K562 (cell line): ENCODE measurements at regions of chr2 and their contacts with region 1.

Region 1: GRCh38 chr2:86105252-86105968 is at the start of gene POLR1A:
- DNase-seq: peak; percentile 65 to 92 (median 73)
- ATAC-seq: peak; percentile 95
- H3K4me3 ChIP-seq: peak within 1 kb of the TSS; percentile 72
- H3K27ac ChIP-seq: peak within 1 kb of the TSS; percentile 82
- H3K4me1 ChIP-seq: peaks cover 0 to 17% of the 10 kb centered on the region in 2 experiments; a peak in 2 of 5 replicates
- H3K27me3 ChIP-seq: no peaks in the 10 kb centered on the region
- CTCF ChIP-seq: no peak
- EP300 ChIP-seq: 0 out of 2 replicates have a peak, but pooled peaks have one; percentile 1
- POLR2A ChIP-seq: 0 out of 2 replicates have a peak, but pooled peaks have one; percentile 66
- RAD21 ChIP-seq: no peak
- polyA plus RNA-seq, gene POLR1A: 3.0 to 8.2 TPM

Region 2: DNA sequence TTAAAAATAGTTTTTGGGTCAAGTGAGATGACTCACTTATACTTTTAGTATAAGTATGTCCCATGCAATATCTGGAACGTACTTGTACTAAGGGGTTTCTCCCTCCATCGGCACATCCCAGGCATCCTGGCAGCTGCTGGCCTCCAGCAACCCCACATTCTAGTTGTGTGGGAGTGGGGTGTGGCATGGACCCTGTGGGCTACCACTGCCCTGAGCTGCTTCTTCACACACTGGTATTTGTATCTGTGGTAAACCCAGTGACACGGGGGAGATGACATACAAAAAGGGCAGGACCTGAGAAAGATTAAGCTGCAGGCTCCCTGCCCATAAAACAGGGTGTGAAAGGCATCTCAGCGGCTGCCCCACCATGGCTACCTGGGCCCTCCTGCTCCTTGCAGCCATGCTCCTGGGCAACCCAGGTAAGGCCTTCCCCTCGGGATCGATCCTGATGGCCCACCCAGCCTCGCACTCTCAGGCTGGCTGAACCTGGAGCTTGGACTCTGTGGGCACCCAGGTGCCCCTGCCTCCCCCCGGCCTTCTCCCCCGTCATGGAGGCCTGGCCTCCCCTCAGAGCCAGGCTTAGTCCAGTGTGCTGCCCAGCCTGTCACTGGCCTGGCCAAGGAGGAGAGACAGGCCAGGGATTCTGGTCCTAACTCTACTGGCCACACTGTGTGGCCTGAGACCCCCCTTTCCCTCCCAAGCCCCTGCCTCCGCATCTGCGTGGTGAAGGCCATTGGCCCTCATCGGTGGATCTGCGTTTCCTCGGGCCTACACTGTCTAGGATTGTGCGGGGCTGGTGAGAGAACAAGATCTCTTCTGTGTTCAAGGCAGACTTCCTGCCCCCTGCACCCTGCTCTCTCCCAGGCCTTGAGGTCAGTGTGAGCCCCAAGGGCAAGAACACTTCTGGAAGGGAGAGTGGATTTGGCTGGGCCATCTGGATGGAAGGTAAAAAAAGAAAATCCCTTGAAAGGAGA is 411.1 kb before region 1 on chr2 and contains the start of gene GNLY:
- CTCF ChIA-PET with region 1: no interaction called
- POLR2A ChIA-PET with region 1: no interaction called
- in situ Hi-C with region 1: no loop called
- intact Hi-C with region 1: no loop called
- DNase-seq: no peak
- ATAC-seq: no peak
- H3K4me3 ChIP-seq: no peak within 1 kb of the TSS
- H3K27ac ChIP-seq: no peak within 1 kb of the TSS
- H3K4me1 ChIP-seq: peaks cover 0 to 9% of the 10 kb centered on the region in 2 experiments; a peak in 2 of 5 replicates
- H3K27me3 ChIP-seq: peaks cover 8 to 12% of the 10 kb centered on the region in 2 experiments; a peak in 3 of 5 replicates
- CTCF ChIP-seq: no peak
- EP300 ChIP-seq: no peak
- POLR2A ChIP-seq: no peak
- RAD21 ChIP-seq: no peak
- polyA plus RNA-seq, gene GNLY: not detected

Region 3: GRCh38 chr2:86118133-86118532 is 12.7 kb after region 1 on chr2:
- CTCF ChIA-PET with region 1: no interaction called
- POLR2A ChIA-PET with region 1: interaction called, 19 read pairs
- in situ Hi-C with region 1: no loop called
- intact Hi-C with region 1: no loop called
- DNase-seq: no peak
- ATAC-seq: no peak
- H3K4me3 ChIP-seq: no peak overlapping the region
- H3K27ac ChIP-seq: no peak overlapping the region
- H3K4me1 ChIP-seq: no peaks in the 10 kb centered on the region
- H3K27me3 ChIP-seq: no peaks in the 10 kb centered on the region
- CTCF ChIP-seq: no peak
- EP300 ChIP-seq: no peak
- POLR2A ChIP-seq: no peak
- RAD21 ChIP-seq: no peak

Region 4: DNA sequence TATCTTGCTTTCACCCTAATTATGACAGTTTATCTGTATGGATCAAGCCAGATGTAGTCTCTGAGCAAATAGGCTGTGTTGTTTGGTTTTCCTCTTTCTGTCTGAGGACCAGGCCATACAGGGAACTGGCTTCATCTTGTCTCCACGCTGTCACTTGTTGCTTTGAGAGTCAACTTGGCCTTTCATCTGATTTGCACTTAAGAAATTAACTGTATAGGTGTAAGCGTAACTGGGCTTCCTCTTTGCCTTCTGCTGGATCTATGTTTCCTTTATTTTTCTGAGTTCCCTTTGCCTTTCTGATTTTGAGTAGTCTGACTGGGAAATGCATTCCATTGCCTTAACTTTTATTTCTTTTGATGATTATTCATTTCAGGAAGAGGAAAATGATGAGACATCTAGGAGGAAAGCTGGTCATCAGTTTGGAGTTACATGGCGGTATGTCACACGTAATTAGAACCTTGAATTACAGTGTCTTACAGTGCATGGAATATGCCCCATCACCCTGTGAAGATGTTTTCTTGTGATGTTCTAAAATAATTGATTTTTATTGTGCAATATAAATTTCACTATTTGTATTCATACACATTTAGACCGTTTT is 18.0 kb after region 1 on chr2:
- CTCF ChIA-PET with region 1: no interaction called
- POLR2A ChIA-PET with region 1: interaction called, 11 read pairs
- in situ Hi-C with region 1: no loop called
- intact Hi-C with region 1: no loop called
- DNase-seq: no peak
- ATAC-seq: no peak
- H3K4me3 ChIP-seq: no peak overlapping the region
- H3K27ac ChIP-seq: no peak overlapping the region
- H3K4me1 ChIP-seq: no peaks in the 10 kb centered on the region
- H3K27me3 ChIP-seq: no peaks in the 10 kb centered on the region
- CTCF ChIP-seq: no peak
- EP300 ChIP-seq: no peak
- POLR2A ChIP-seq: no peak
- RAD21 ChIP-seq: no peak